Colonic mucosa (tissue), 4 donors: ENCODE measurements at regions of chr12 and their contacts with region 1.

Region 1: DNA sequence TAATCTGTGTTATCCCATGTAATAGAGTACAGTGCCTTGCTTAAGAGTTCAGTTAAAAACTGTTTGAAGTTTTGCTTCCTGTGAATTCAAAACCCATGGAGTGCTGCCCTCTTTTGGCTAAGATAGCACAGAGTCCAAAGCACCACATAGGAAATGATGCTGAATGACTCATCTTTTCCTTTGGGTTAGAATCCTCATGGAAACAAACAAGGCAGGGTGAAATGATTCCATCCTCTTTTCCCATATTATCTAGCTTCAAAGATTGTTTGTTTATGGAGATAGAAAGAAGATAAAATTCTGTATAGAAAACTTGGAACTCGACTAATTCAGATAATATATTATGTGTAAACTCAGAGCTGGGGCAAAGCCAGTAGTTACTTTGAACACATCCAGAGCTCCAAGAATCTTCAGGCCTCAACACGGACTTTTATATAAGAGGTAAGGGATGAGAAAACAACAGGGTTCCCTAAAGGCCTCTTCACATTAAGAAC is 87.4 kb downstream of the OTOGL start:
- DNase-seq: peak; percentile 54
- H3K4me3 ChIP-seq: no peak overlapping the region
- H3K27ac ChIP-seq: peak overlapping the region; percentile 25
- H3K4me1 ChIP-seq: no peaks in the 10 kb centered on the region
- H3K27me3 ChIP-seq: no peaks in the 10 kb centered on the region
- CTCF ChIP-seq: peak; percentile 52

Region 2: DNA sequence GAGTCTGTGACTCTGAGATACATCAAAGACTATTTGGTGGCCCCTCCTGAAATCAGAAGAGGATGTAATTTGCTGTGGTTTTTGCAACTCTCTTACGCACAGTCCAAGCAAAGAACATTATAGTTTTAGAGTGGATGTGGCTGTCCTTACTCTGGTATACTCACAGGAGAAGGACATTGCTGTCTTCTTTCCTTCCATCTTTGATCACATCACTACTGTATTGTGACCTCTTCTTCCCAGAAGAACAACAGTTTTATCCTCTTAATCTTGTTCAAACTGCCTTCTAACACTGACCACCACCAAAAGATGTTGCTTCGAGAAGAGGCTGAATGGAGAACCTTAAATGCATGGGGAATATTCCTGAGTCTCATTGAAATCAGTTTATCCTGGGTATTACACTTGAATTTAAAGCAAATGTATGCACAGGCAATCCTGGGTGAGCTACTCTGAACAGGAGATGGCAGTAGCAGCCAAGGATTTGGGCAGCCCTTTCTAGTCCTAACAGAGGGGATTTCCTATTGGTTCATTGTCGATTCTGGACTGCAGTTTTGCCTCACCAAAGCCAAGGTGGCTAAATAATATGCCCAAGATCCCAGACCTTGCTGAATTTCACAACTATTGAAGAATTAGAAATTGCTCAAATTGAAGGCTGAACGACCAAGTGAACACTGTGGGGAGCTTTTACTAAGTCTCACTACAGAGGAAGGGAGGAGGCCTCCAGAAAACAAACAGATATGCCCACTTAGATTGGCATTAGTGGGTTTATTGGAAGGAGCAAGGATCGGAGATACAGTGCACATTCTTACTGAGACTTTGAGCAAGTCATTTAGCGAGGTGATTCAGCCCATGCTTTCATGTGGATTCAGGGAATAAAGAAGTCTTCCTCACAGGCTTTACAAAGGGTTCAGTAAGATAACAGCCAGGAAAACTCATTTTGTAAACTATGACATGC is 778.8 kb before region 1 on chr12:
- intact Hi-C with region 1: loop called (anchors 5 kb)
- DNase-seq: peak; percentile 78
- H3K4me3 ChIP-seq: no peak overlapping the region
- H3K27ac ChIP-seq: no peak overlapping the region
- H3K4me1 ChIP-seq: peaks cover 6% of the 10 kb centered on the region
- H3K27me3 ChIP-seq: no peaks in the 10 kb centered on the region
- CTCF ChIP-seq: peak; percentile 63

Region 3: GRCh38 chr12:79555028-79555930 is 631.5 kb before region 1 on chr12:
- intact Hi-C with region 1: loop called (anchors 5 kb)
- DNase-seq: no peak
- H3K4me3 ChIP-seq: no peak overlapping the region
- H3K27ac ChIP-seq: no peak overlapping the region
- H3K4me1 ChIP-seq: no peaks in the 10 kb centered on the region
- H3K27me3 ChIP-seq: no peaks in the 10 kb centered on the region
- CTCF ChIP-seq: peak; percentile 38

Region 4: GRCh38 chr12:79897617-79898016 is 289.2 kb before region 1 on chr12:
- intact Hi-C with region 1: loop called (anchors 10 kb)
- DNase-seq: no peak
- H3K4me3 ChIP-seq: no peak overlapping the region
- H3K27ac ChIP-seq: no peak overlapping the region
- H3K4me1 ChIP-seq: no peaks in the 10 kb centered on the region
- H3K27me3 ChIP-seq: no peaks in the 10 kb centered on the region
- CTCF ChIP-seq: no peak